IMR-90 (cell line): ENCODE measurements at regions of chr3 and their contacts with region 1.

Region 1: GRCh38 chr3:73608456-73609314 is 16.1 kb downstream of the PDZRN3 start:
- DNase-seq: no peak
- ATAC-seq: no peak
- H3K4me3 ChIP-seq: no peak overlapping the region
- H3K27ac ChIP-seq: no peak overlapping the region
- H3K4me1 ChIP-seq: peaks cover 10% of the 10 kb centered on the region
- H3K27me3 ChIP-seq: no peaks in the 10 kb centered on the region
- CTCF ChIP-seq: no peak
- POLR2A ChIP-seq: no peak
- RAD21 ChIP-seq: no peak

Region 2: GRCh38 chr3:73530022-73530396 is 78.7 kb before region 1 on chr3:
- CTCF ChIA-PET with region 1: no interaction called
- POLR2A ChIA-PET with region 1: no interaction called
- dilution Hi-C with region 1: no loop called
- in situ Hi-C with region 1: no loop called
- intact Hi-C with region 1: no loop called
- DNase-seq: peak; percentile 82
- ATAC-seq: peak; percentile 83
- H3K4me3 ChIP-seq: no peak overlapping the region
- H3K27ac ChIP-seq: no peak overlapping the region
- H3K4me1 ChIP-seq: peaks cover 5% of the 10 kb centered on the region
- H3K27me3 ChIP-seq: no peaks in the 10 kb centered on the region
- CTCF ChIP-seq: no peak
- POLR2A ChIP-seq: no peak
- RAD21 ChIP-seq: no peak

Region 3: DNA sequence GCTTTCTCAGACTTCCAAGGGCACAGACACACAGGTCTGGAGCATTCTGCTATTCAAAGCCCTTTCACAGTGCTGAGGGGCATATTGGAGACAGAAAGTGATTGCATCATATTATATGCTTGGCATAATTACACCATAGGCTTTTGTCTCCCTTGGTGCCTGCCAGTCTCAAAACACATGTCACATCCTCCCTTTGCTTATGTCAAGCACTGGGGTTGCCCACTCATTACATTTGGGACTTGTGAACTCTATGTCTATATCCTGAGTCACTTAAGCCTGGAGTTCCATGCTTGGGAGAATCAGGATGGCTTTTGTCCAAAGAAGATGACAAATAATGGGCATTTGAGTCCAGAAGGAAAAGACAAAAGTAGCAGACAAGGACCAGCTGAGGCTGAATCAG is 28.4 kb after region 1 on chr3:
- CTCF ChIA-PET with region 1: no interaction called
- POLR2A ChIA-PET with region 1: interaction called, 13 read pairs
- dilution Hi-C with region 1: no loop called
- in situ Hi-C with region 1: no loop called
- intact Hi-C with region 1: no loop called
- DNase-seq: peak; percentile 55
- ATAC-seq: no peak
- H3K4me3 ChIP-seq: no peak overlapping the region
- H3K27ac ChIP-seq: no peak overlapping the region
- H3K4me1 ChIP-seq: peaks cover 16% of the 10 kb centered on the region
- H3K27me3 ChIP-seq: no peaks in the 10 kb centered on the region
- CTCF ChIP-seq: no peak
- POLR2A ChIP-seq: no peak
- RAD21 ChIP-seq: no peak